ENCODE measurements at regions of chr22 and their contacts with region 1.

Region 1: GRCh38 chr22:45645526-45646414 is 25.9 kb upstream of the ATXN10 start:
- DNase-seq: no peak
- H3K4me3 ChIP-seq: peak overlapping the region; percentile 21
- H3K27me3 ChIP-seq: peaks cover 11% of the 10 kb centered on the region; the same call in 1 of the 2 replicates
- CTCF ChIP-seq: peak; percentile 55

Region 2: DNA sequence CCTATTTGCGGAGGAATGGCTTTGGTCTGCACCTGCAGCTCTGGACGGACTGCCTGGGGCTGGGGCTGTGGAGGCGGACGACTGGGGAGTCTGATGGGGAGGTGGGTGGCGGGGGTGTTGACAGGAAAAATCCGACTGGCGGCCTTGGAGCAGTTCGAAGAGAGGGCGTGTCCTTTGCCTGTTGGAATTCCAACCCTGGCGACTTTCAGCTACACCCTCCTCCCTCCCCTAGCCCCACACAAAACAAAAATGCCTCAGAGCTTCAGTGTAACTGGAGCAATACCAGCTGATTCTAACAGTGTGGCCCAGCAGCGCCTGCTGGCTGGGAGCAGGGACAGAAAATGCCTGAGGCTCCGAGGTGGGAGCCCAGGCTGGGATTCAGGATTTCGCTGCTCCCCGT is 111.3 kb after region 1 on chr22:
- CTCF ChIA-PET with region 1: interaction called, 12 read pairs
- POLR2A ChIA-PET with region 1: no interaction called
- DNase-seq: peak; percentile 53
- H3K4me3 ChIP-seq: no peak overlapping the region
- H3K27me3 ChIP-seq: no peaks in the 10 kb centered on the region
- CTCF ChIP-seq: peak; percentile 52

Region 3: GRCh38 chr22:45831394-45831793 is 185.6 kb after region 1 on chr22:
- CTCF ChIA-PET with region 1: interaction called, 12 read pairs
- POLR2A ChIA-PET with region 1: no interaction called
- DNase-seq: no peak
- H3K4me3 ChIP-seq: no peak overlapping the region
- H3K27me3 ChIP-seq: no peaks in the 10 kb centered on the region
- CTCF ChIP-seq: peak; percentile 59

Measured in BJ (cell line).